BJ (cell line): ENCODE measurements at regions of chr12 and their contacts with region 1.

Region 1: GRCh38 chr12:91123236-91123916 is 12.1 kb upstream of the LUM start:
- DNase-seq: no peak
- H3K4me3 ChIP-seq: no peak overlapping the region
- H3K27me3 ChIP-seq: no peaks in the 10 kb centered on the region
- CTCF ChIP-seq: no peak

Region 2: GRCh38 chr12:91189516-91189915 is 66.1 kb after region 1 on chr12:
- CTCF ChIA-PET with region 1: no interaction called
- POLR2A ChIA-PET with region 1: no interaction called
- DNase-seq: no peak
- H3K4me3 ChIP-seq: no peak overlapping the region
- H3K27me3 ChIP-seq: no peaks in the 10 kb centered on the region
- CTCF ChIP-seq: no peak

Region 3: GRCh38 chr12:91249518-91250272 is 126.3 kb after region 1 on chr12:
- CTCF ChIA-PET with region 1: no interaction called
- POLR2A ChIA-PET with region 1: interaction called, 25 read pairs
- DNase-seq: peak; percentile 60
- H3K4me3 ChIP-seq: no peak overlapping the region
- H3K27me3 ChIP-seq: no peaks in the 10 kb centered on the region
- CTCF ChIP-seq: no peak